Activated CD4-positive, alpha-beta memory T cell treated with anti-CD3 and anti-CD28 coated beads for 36 hours (primary cell): ENCODE measurements at regions of chr5 and their contacts with region 1.

Region 1: DNA sequence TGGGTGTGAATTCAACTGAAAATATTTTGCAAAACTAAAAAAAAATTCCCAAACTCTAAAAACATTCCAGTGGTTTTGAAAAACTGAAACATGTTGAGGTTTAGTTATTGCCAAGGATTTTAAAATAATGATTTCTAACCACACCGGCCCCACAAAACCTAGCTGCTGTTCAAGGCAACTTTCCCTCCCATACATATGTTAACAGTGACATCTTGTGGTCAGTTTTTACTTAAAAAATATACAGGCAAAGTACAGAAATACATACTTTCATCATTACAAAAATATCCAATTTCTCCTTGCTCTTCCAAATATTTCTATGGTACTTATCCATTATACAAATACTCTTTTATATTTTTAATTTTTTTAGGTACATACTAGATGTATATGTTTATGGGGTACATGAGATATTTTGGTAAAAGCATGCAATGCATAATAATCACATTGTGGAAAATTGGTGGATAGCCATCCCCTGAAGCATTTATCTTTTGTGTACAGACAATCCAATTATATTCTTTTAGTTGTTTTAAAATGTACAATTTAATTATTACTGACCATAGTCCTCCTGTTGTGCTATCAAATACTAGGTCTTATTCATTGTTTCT is 34.4 kb upstream of the MRPS30 start:
- DNase-seq: no peak
- H3K4me3 Mint-ChIP-seq: no peak overlapping the region
- H3K27ac Mint-ChIP-seq: no peak overlapping the region
- H3K4me1 Mint-ChIP-seq: no peaks in the 10 kb centered on the region
- H3K27me3 Mint-ChIP-seq: peaks cover 15% of the 10 kb centered on the region

Region 2: GRCh38 chr5:43729846-43730478 is 1044.4 kb before region 1 on chr5:
- CTCF ChIA-PET with region 1: interaction called, 14 read pairs
- POLR2A ChIA-PET with region 1: no interaction called
- intact Hi-C with region 1: loop called (anchors 2 kb)
- DNase-seq: no peak
- H3K4me3 Mint-ChIP-seq: no peak overlapping the region
- H3K27ac Mint-ChIP-seq: no peak overlapping the region
- H3K4me1 Mint-ChIP-seq: no peaks in the 10 kb centered on the region
- H3K27me3 Mint-ChIP-seq: peaks cover 3% of the 10 kb centered on the region

Region 3: DNA sequence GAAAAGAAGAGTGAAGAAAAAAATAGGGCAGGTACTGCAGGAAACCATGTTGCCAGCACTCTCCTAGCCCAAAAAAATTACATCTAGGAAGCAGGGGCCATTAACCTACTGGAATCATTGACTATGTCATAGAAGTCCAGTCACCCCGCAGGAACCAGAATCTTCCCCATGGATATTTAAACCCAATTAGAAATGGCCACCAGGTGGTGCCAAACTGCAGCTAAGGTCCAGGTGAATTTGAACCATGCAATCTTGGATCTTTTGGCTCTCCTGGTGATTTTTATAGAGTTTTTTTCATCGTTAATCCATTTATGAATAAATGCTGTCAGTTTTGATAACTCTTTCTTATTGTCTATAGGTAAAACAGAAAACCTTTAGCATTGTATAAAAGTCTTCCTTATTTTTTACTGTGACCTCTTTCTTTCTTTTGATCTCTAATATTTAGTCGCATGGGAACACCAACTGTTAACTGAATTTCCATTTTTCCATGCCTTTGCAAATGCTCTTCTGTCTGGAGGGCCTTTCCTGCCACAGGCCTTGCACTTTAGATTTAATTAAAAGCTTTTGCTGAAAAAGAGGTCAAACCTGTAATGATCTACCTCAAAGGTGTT is 237.6 kb before region 1 on chr5:
- CTCF ChIA-PET with region 1: no interaction called
- POLR2A ChIA-PET with region 1: no interaction called
- intact Hi-C with region 1: loop called (anchors 1 kb)
- DNase-seq: no peak
- H3K4me3 Mint-ChIP-seq: no peak overlapping the region
- H3K27ac Mint-ChIP-seq: no peak overlapping the region
- H3K4me1 Mint-ChIP-seq: no peaks in the 10 kb centered on the region
- H3K27me3 Mint-ChIP-seq: no peaks in the 10 kb centered on the region

Region 4: DNA sequence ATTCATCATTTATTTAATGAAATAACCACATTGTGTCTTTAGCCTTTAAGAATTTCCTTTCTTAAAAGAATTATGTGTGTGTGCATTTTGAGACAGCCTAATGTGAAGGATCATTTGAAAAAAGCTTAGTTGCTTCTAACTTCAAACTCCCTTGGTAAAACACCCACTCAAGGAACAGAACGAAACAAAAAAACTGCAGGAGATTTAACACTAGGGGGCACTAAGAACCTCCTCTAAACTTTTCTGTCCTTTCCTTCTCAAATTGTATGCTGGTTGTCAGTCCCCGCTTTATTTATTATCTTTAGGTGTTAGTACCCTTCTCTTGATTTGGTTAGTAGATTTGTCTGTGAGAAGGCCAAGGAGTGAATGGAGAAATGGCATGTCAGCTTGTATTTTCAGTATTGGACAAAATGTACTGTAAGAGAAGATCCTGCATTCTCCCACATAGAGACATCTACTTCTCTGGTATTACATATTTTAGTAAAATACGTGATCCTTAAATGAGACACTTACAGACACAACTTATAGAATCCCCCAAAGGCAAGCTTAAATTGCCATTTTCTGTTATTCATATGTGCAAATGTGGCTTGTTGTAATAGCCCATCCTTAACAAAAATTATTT is 264.1 kb after region 1 on chr5:
- CTCF ChIA-PET with region 1: no interaction called
- POLR2A ChIA-PET with region 1: no interaction called
- intact Hi-C with region 1: no loop called
- DNase-seq: no peak
- H3K4me3 Mint-ChIP-seq: no peak overlapping the region
- H3K27ac Mint-ChIP-seq: no peak overlapping the region
- H3K4me1 Mint-ChIP-seq: no peaks in the 10 kb centered on the region
- H3K27me3 Mint-ChIP-seq: no peaks in the 10 kb centered on the region